Activated T-helper 1 cell treated with anti-CD3 and anti-CD28 coated beads, Interleukin-12 subunit alpha, Interleukin-12 subunit beta, Interleukin-2, Interleukin-4 antibody, amounts not matched to agents 30 ng/mL and 10 ng/mL and 1 ng/mL, durations not matched to agents 14 hours and 24 hours and 36 hours (primary cell): ENCODE measurements at regions of chr6 and their contacts with region 1.

Region 1: GRCh38 chr6:15399641-15400470 is 154.0 kb downstream of the JARID2 start:
- DNase-seq: no peak
- H3K4me3 Mint-ChIP-seq: peak overlapping the region; percentile 80
- H3K27ac Mint-ChIP-seq: peak overlapping the region; percentile 61
- H3K4me1 Mint-ChIP-seq: peaks cover 77% of the 10 kb centered on the region
- H3K27me3 Mint-ChIP-seq: no peaks in the 10 kb centered on the region

Region 2: GRCh38 chr6:15363523-15364400 is 36.1 kb before region 1 on chr6:
- intact Hi-C with region 1: loop called (anchors 5 kb)
- DNase-seq: no peak
- H3K4me3 Mint-ChIP-seq: no peak overlapping the region
- H3K27ac Mint-ChIP-seq: no peak overlapping the region
- H3K4me1 Mint-ChIP-seq: peaks cover 46% of the 10 kb centered on the region
- H3K27me3 Mint-ChIP-seq: no peaks in the 10 kb centered on the region

Region 3: GRCh38 chr6:15421947-15422733 is 22.3 kb after region 1 on chr6:
- intact Hi-C with region 1: loop called (anchors 2 kb)
- DNase-seq: peak; percentile 50
- H3K4me3 Mint-ChIP-seq: peak overlapping the region; percentile 59
- H3K27ac Mint-ChIP-seq: peak overlapping the region; percentile 83
- H3K4me1 Mint-ChIP-seq: peaks cover 80% of the 10 kb centered on the region
- H3K27me3 Mint-ChIP-seq: no peaks in the 10 kb centered on the region

Region 4: DNA sequence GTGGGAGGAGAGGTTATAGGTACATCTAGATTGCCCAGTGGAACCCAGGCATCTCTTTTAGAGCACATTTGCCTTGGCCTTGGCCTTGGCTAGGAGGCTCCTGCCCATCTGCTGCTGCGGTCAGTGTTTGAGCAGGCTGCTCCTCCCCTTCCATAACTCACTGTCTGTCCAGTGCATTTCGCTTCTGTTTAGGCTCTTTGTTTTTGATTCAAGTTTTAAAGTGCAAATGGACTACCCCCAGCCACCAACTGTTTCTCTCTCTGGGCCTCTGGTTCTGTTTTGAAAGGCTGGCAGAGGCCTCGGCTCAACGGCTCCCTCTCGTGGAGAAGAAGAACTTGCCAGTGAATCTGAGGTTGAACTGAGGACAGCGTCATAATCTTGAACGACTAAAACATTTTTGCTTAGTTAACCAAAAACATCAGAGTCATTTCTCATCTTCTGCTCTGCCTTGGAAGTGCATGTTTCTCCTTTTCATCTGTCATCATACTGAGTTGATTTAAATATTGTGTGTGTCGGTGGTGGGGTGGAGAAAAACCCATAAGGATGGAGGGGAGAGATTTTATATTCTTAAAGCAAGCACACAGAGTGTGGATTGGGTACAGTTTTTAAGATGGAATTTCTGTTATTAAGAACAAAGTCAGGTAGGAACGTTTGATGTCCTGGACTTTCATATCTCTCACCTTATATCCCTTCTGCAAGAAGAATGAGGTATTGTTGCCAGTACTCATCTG is 91.6 kb after region 1 on chr6:
- intact Hi-C with region 1: no loop called
- DNase-seq: peak; percentile 55
- H3K4me3 Mint-ChIP-seq: no peak overlapping the region
- H3K27ac Mint-ChIP-seq: peak overlapping the region; percentile 77
- H3K4me1 Mint-ChIP-seq: peaks cover 31% of the 10 kb centered on the region
- H3K27me3 Mint-ChIP-seq: peaks cover 1% of the 10 kb centered on the region